ENCODE measurements at regions of chr5 and their contacts with region 1.

Region 1: GRCh38 chr5:105288946-105289345 is 1726.4 kb upstream of the NUDT12 start:
- DNase-seq: no peak
- H3K4me3 ChIP-seq: no peak overlapping the region
- H3K27ac ChIP-seq: no peak overlapping the region
- H3K4me1 ChIP-seq: no peaks in the 10 kb centered on the region
- H3K27me3 ChIP-seq: no peaks in the 10 kb centered on the region
- CTCF ChIP-seq: no peak
- POLR2A ChIP-seq: no peak

Region 2: DNA sequence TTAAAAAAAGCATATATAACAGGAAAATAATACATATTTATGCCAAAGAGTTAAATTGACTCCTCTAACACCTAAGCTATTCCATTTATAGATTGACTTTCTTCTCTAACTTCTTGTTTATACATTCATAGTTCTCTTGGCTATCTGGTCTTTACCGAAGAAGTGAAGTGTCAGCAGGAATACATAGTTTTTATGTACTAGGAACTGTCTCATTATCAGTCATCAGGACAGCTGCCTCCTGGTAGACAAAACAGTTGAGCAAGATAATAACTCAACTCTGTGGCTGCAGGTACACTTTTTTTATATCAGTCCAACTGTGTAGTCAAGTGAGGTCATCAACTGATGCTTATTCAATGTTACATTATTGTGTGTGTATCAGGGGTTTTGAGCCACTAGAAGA is 290.4 kb before region 1 on chr5:
- intact Hi-C with region 1: no loop called
- DNase-seq: no peak
- H3K4me3 ChIP-seq: no peak overlapping the region
- H3K27ac ChIP-seq: no peak overlapping the region
- H3K4me1 ChIP-seq: no peaks in the 10 kb centered on the region
- H3K27me3 ChIP-seq: no peaks in the 10 kb centered on the region
- CTCF ChIP-seq: no peak
- POLR2A ChIP-seq: no peak

Region 3: GRCh38 chr5:105230516-105231157 is 58.3 kb before region 1 on chr5:
- intact Hi-C with region 1: no loop called
- DNase-seq: no peak
- H3K4me3 ChIP-seq: no peak overlapping the region
- H3K27ac ChIP-seq: no peak overlapping the region
- H3K4me1 ChIP-seq: no peaks in the 10 kb centered on the region
- H3K27me3 ChIP-seq: no peaks in the 10 kb centered on the region
- CTCF ChIP-seq: no peak
- POLR2A ChIP-seq: no peak

Region 4: DNA sequence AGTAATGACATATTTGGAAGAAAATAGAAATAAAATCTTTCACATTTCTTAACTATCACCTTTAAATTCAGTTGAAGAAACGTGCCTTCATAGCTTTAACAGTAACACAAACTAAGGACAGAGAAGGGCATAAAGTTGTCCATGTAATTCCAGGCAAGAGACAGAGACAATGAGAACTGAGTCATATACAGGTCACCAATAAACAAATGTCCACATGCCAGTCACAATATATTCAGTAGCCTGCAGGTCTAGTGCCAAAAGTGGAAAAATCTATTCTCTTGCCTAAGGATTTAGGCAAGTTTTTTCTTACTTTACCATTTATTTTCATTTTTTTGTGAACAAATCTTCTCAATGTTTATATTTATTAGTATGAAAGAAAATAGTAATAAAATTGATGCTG is 14.9 kb before region 1 on chr5:
- intact Hi-C with region 1: no loop called
- DNase-seq: no peak
- H3K4me3 ChIP-seq: no peak overlapping the region
- H3K27ac ChIP-seq: no peak overlapping the region
- H3K4me1 ChIP-seq: no peaks in the 10 kb centered on the region
- H3K27me3 ChIP-seq: no peaks in the 10 kb centered on the region
- CTCF ChIP-seq: no peak
- POLR2A ChIP-seq: no peak

Region 5: DNA sequence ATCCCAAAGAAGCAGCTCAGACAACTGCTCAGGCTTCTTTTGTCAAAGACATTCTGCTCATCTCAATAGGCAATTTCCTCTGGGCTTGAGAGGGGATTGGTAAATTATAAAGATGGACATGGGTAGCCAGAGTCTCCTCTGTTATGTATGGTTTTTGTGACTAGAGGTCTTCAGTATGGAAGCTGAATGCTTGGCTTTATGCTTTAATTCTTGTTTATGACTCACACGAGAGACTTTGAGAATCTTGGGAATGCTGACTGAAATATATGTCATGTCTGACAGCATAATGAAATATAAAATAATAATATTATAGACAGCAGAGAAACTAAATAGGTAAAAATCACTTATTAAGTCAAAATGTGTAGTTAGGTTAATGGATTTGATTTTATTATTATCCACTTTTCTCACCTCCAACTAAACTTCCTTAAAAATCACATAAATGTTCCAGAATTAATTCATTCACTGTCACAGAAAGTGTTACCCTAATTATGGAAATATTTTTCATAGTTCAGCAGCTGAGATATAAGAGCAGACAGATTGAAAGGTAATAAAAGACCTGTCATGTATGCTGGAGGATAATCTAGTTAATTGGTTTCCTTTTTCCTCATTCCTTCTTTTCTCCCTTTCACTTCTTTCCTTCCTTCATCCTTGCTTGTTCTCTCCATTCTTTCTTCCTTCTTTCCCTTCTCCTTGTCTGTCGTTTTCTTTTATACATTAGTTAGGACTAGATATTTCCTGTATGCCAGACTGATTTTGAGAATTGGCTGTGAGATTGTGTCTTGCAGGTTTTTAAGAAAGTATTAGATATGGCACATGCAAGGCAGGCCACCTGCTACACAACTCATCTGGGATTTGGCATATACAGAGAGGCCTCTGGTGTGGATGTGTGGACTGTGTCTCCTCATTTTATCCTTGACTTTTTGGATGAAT is 139.8 kb after region 1 on chr5:
- intact Hi-C with region 1: loop called (anchors 10 kb)
- DNase-seq: no peak
- H3K4me3 ChIP-seq: no peak overlapping the region
- H3K27ac ChIP-seq: no peak overlapping the region
- H3K4me1 ChIP-seq: no peaks in the 10 kb centered on the region
- H3K27me3 ChIP-seq: no peaks in the 10 kb centered on the region
- CTCF ChIP-seq: no peak
- POLR2A ChIP-seq: no peak

Region 6: DNA sequence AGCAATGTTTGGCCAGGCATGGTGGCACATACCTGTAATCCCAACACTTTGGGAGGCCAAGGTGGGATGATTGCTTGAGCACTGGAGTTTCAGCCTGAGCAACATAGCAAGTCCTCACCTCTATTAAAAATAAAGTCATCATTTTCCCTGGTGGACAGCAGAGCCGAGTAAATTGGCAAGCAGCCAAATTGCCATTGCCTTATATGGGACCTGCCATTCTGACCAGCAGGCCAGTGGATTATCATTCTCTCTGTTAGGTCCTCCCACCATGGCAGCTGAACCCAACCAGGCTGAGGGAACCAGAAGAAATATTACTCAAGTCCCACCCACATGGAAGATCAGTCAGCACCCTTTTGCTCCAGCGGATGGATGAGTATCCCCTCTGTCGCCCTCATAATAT is 551.9 kb after region 1 on chr5:
- intact Hi-C with region 1: loop called (anchors 5 kb)
- DNase-seq: no peak
- H3K4me3 ChIP-seq: no peak overlapping the region
- H3K27ac ChIP-seq: no peak overlapping the region
- H3K4me1 ChIP-seq: no peaks in the 10 kb centered on the region
- H3K27me3 ChIP-seq: no peaks in the 10 kb centered on the region
- CTCF ChIP-seq: no peak
- POLR2A ChIP-seq: no peak

Measured in breast epithelium (tissue), 4 donors.